GM13976 (cell line): ENCODE measurements at regions of chr9 and their contacts with region 1.

Region 1: GRCh38 chr9:4750023-4750673 is 9.1 kb upstream of the AK3 start:
- DNase-seq: peak; percentile 36
- CTCF ChIP-seq: peak; percentile 51

Region 2: GRCh38 chr9:4879112-4879558 is 129.0 kb after region 1 on chr9:
- in situ Hi-C with region 1: no loop called
- DNase-seq: no peak
- CTCF ChIP-seq: no peak

Region 3: GRCh38 chr9:5425006-5425628 is 675.0 kb after region 1 on chr9:
- in situ Hi-C with region 1: loop called (anchors 10 kb)
- DNase-seq: peak; percentile 41
- CTCF ChIP-seq: no peak